CD4-positive, alpha-beta memory T cell (primary cell): ENCODE measurements at regions of chr10 and their contacts with region 1.

Region 1: GRCh38 chr10:123132576-123133477 is 2.9 kb upstream of the HMX3 start:
- DNase-seq: peak; percentile 78 to 82 (median 79)
- H3K4me3 ChIP-seq: no peak overlapping the region
- H3K4me3 Mint-ChIP-seq: peak overlapping the region; percentile 36 to 92 (median 79)
- H3K27ac ChIP-seq: no peak overlapping the region
- H3K27ac Mint-ChIP-seq: peak overlapping the region in 6 of 7 donors; percentile 26 to 92 (median 72)
- H3K4me1 ChIP-seq: peaks cover 46% of the 10 kb centered on the region
- H3K4me1 Mint-ChIP-seq: peaks cover 14 to 43% (median 29%) of the 10 kb centered on the region in 4 donors
- H3K27me3 ChIP-seq: peaks cover 35% of the 10 kb centered on the region
- H3K27me3 Mint-ChIP-seq: peaks cover 51 to 60% of the 10 kb centered on the region in 2 donors

Region 2: DNA sequence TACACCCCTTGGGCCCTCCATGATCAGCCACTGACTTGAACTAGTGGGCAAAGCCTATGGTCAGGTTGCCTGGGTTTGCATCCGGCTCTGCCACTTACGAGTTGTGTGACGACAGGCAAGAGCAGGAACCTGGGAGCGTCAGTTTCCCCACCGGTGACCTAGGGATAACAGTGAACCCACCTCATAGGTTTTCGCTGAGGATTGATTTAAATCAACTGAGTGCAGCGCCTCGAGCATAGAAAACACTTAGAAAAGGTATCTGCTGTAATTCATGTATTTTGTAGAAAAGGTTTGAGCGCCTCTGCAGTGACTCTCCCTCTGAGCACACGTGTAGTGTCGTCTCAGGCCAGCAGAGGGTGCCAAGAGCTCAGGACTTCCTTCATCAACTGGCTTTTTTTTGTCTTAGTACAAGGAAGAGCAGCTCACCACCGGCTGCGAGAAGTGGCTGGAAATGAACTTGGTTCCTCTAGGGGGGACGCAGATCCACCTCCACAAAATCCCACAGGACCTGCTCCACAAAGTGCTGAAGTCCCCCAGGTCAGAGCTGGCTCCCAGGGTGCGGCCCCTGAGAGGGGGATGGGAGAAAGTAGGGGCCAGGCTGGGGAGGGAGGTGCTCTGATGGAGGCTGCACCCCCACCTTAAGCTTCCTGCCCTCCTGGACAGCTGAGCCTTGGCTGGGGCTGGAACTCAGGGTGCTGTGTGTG is 834.1 kb before region 1 on chr10:
- CTCF ChIA-PET with region 1: no interaction called
- POLR2A ChIA-PET with region 1: no interaction called
- intact Hi-C with region 1: loop called (anchors 2 kb)
- DNase-seq: peak; percentile 55 to 63 (median 56)
- H3K4me3 ChIP-seq: peak overlapping the region in 1 of 2 donors; percentile 6
- H3K4me3 Mint-ChIP-seq: peak overlapping the region in 6 of 8 donors; percentile 53 to 74 (median 60)
- H3K27ac ChIP-seq: no peak overlapping the region
- H3K27ac Mint-ChIP-seq: peak overlapping the region in 4 of 7 donors; percentile 1 to 54 (median 47)
- H3K4me1 ChIP-seq: peaks cover 17% of the 10 kb centered on the region
- H3K4me1 Mint-ChIP-seq: peaks cover 12 to 27% (median 16%) of the 10 kb centered on the region in 4 donors
- H3K27me3 ChIP-seq: no peaks in the 10 kb centered on the region
- H3K27me3 Mint-ChIP-seq: peaks cover 0 to 5% of the 10 kb centered on the region in 2 donors

Region 3: GRCh38 chr10:123043409-123043925 is 89.4 kb before region 1 on chr10:
- CTCF ChIA-PET with region 1: interaction called, 12 read pairs
- POLR2A ChIA-PET with region 1: no interaction called
- intact Hi-C with region 1: loop called (anchors 2 kb)
- DNase-seq: peak in 4 of 5 donors; percentile 30 to 43 (median 38)
- H3K4me3 ChIP-seq: no peak overlapping the region
- H3K4me3 Mint-ChIP-seq: no peak overlapping the region
- H3K27ac ChIP-seq: no peak overlapping the region
- H3K27ac Mint-ChIP-seq: no peak overlapping the region
- H3K4me1 ChIP-seq: no peaks in the 10 kb centered on the region
- H3K4me1 Mint-ChIP-seq: peaks cover 0 to 13% (median 4%) of the 10 kb centered on the region in 4 donors
- H3K27me3 ChIP-seq: no peaks in the 10 kb centered on the region
- H3K27me3 Mint-ChIP-seq: no peaks in the 10 kb centered on the region

Region 4: GRCh38 chr10:123272171-123272570 is 139.3 kb after region 1 on chr10:
- CTCF ChIA-PET with region 1: interaction called, 6 read pairs
- POLR2A ChIA-PET with region 1: no interaction called
- intact Hi-C with region 1: loop called (anchors 2 kb)
- DNase-seq: no peak
- H3K4me3 ChIP-seq: no peak overlapping the region
- H3K4me3 Mint-ChIP-seq: no peak overlapping the region
- H3K27ac ChIP-seq: no peak overlapping the region
- H3K27ac Mint-ChIP-seq: no peak overlapping the region
- H3K4me1 ChIP-seq: no peaks in the 10 kb centered on the region
- H3K4me1 Mint-ChIP-seq: peaks cover 0 to 10% (median 0%) of the 10 kb centered on the region in 4 donors
- H3K27me3 ChIP-seq: no peaks in the 10 kb centered on the region
- H3K27me3 Mint-ChIP-seq: peaks cover 5 to 14% of the 10 kb centered on the region in 2 donors

Region 5: DNA sequence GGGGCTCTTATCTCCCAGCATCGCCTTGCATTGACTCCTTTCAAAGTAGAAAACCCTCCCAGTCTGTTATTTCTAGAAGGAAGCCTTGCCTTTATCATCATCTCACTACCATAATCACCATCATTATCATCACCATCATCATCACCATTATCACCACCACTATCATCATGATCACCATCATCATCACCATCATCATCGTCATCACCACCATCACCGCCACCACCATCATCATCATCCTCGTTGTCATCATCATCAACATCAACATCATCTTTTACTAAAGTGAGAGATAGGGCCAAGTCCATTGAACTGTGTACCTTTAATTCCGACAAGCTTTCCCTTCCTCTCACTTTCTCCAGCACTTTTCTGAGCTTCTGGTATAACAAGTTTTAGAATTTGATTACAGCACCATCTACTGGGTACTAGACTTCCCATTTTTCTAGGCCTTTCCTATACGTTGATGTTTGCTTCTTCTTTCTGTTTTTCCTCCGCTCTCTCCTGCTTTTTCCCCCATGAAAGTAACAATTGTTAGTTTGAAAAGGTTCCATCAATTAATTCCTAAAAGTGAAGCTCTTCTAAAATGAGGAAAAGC is 247.8 kb after region 1 on chr10:
- CTCF ChIA-PET with region 1: interaction called, 7 read pairs
- POLR2A ChIA-PET with region 1: no interaction called
- intact Hi-C with region 1: loop called (anchors 1 kb)
- DNase-seq: peak in 3 of 5 donors; percentile 2 to 19 (median 5)
- H3K4me3 ChIP-seq: no peak overlapping the region
- H3K4me3 Mint-ChIP-seq: no peak overlapping the region
- H3K27ac ChIP-seq: no peak overlapping the region
- H3K27ac Mint-ChIP-seq: peak overlapping the region in 1 of 7 donors; percentile 0
- H3K4me1 ChIP-seq: no peaks in the 10 kb centered on the region
- H3K4me1 Mint-ChIP-seq: peaks cover 0 to 2% (median 0%) of the 10 kb centered on the region in 4 donors
- H3K27me3 ChIP-seq: no peaks in the 10 kb centered on the region
- H3K27me3 Mint-ChIP-seq: peaks cover 10 to 13% of the 10 kb centered on the region in 2 donors

Region 6: DNA sequence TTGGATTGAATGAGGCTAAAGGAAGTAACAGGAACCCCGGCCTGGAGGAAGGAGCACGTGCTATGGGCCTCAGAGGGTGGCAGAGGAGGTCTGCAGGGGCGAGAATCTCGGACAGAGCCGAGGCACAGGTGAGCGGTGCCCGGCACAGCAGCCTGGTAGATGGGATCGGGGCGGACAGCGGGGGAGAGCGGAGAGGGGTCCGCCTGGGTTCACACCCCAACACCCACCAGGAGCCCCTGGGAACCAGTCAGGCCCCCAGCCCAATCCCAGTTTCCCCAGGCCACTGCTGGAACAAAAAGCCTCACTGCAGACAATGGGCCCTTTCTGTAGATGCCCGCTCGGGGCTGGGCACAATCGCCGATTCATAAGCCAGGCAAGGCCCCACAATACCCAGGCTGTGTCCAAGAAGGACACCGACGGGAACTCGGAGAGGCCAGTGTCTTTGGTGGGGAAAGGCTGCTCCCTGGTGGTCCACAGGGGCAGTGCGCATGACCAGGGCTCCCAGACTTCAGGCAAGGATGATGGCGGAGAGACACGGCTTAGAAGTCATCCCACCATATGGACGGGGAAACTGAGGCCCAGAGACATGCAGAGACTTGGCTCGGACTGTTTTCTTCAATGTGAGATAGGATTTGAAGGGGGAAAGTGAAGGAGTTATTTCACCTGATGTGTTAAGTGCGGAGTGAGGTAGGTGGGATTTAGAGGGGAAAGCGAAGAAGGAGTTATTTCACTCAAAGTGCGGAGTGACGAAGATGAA is 426.4 kb after region 1 on chr10:
- CTCF ChIA-PET with region 1: interaction called, 52 read pairs
- POLR2A ChIA-PET with region 1: no interaction called
- intact Hi-C with region 1: loop called (anchors 1 kb)
- DNase-seq: peak; percentile 39 to 64 (median 43)
- H3K4me3 ChIP-seq: no peak overlapping the region
- H3K4me3 Mint-ChIP-seq: no peak overlapping the region
- H3K27ac ChIP-seq: no peak overlapping the region
- H3K27ac Mint-ChIP-seq: peak overlapping the region in 2 of 7 donors; percentile 32 to 38
- H3K4me1 ChIP-seq: no peaks in the 10 kb centered on the region
- H3K4me1 Mint-ChIP-seq: peaks cover 0 to 2% (median 0%) of the 10 kb centered on the region in 4 donors
- H3K27me3 ChIP-seq: no peaks in the 10 kb centered on the region
- H3K27me3 Mint-ChIP-seq: peaks cover 5 to 18% of the 10 kb centered on the region in 2 donors